ENCODE measurements at regions of chrX and their contacts with region 1.

Region 1: GRCh38 chrX:137051978-137052642 is 18.3 kb upstream of the GPR101 start:
- DNase-seq: peak; percentile 64 to 83 (median 76)
- H3K4me3 ChIP-seq: peak overlapping the region in 2 of 3 donors; percentile 36 to 59
- H3K27ac ChIP-seq: no peak overlapping the region
- H3K4me1 ChIP-seq: no peaks in the 10 kb centered on the region
- H3K27me3 ChIP-seq: peaks cover 12% of the 10 kb centered on the region
- CTCF ChIP-seq: peak; percentile 53

Region 2: DNA sequence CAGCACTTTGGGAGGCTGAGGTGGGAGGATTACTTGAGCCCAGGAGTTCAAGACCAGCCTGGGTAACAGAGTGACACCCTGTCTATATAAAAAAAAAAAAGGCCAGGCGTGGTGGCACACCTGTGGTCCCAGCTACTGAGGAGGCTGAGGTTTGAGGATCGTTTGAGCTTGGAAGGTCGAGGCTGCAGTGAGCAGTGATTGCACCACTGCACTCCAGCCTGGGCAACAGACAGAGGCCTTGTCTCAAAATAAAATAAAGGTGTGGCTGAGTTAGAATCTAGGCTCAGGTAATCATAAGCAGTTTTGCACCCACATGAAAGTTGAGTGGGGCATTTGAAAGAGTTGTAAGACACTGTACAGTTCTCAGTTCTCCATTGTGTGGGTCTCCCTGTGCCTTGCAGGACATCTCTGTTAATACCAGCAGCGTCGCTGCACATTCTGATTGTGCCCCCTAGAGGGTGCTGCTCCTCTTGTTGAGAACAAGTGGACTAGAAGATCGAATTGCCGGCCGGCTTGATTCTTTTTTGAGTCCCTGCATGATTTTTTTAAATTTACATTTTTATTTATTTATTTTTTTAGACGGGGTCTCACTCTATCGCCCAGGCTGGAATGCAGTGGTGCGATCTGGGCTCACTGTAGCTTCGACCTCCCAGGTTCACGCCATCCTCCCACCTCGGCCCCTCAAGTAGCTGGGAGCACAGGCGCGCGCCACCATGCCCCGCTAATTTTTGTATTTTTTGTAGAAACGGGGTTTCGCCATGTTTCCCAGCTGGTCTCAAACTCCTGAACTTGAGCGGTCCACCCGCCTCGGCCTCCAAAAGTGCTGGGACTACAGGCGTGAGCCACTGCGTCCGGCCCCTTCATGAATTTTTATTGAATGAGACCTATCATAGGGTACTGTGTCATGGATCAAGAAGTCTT is 98.0 kb before region 1 on chrX:
- intact Hi-C with region 1: loop called (anchors 10 kb)
- DNase-seq: peak; percentile 43 to 76 (median 59)
- H3K4me3 ChIP-seq: no peak overlapping the region
- H3K27ac ChIP-seq: no peak overlapping the region
- H3K4me1 ChIP-seq: no peaks in the 10 kb centered on the region
- H3K27me3 ChIP-seq: no peaks in the 10 kb centered on the region
- CTCF ChIP-seq: peak; percentile 29